CD8-positive, alpha-beta memory T cell (primary cell): ENCODE measurements at regions of chr1 and their contacts with region 1.

Region 1: GRCh38 chr1:206544562-206545257 is 37.4 kb downstream of the RASSF5 start:
- DNase-seq: peak; percentile 67 to 87 (median 75)
- H3K4me3 ChIP-seq: no peak overlapping the region
- H3K4me3 Mint-ChIP-seq: no peak overlapping the region
- H3K27ac ChIP-seq: no peak overlapping the region
- H3K27ac Mint-ChIP-seq: peak overlapping the region in 5 of 8 donors; percentile 36 to 70 (median 44)
- H3K4me1 ChIP-seq: peaks cover 8% of the 10 kb centered on the region
- H3K4me1 Mint-ChIP-seq: peaks cover 10 to 16% (median 15%) of the 10 kb centered on the region in 3 donors
- H3K27me3 ChIP-seq: no peaks in the 10 kb centered on the region
- H3K27me3 Mint-ChIP-seq: peaks cover 0 to 3% of the 10 kb centered on the region in 2 donors

Region 2: GRCh38 chr1:206479183-206480125 is 65.3 kb before region 1 on chr1:
- CTCF ChIA-PET with region 1: interaction called, 11 read pairs
- POLR2A ChIA-PET with region 1: no interaction called
- DNase-seq: peak; percentile 45 to 77 (median 52)
- H3K4me3 ChIP-seq: no peak overlapping the region
- H3K4me3 Mint-ChIP-seq: no peak overlapping the region
- H3K27ac ChIP-seq: no peak overlapping the region
- H3K27ac Mint-ChIP-seq: peak overlapping the region in 6 of 8 donors; percentile 8 to 72 (median 40)
- H3K4me1 ChIP-seq: no peaks in the 10 kb centered on the region
- H3K4me1 Mint-ChIP-seq: peaks cover 7 to 22% (median 10%) of the 10 kb centered on the region in 3 donors
- H3K27me3 ChIP-seq: no peaks in the 10 kb centered on the region
- H3K27me3 Mint-ChIP-seq: no peaks in the 10 kb centered on the region

Region 3: DNA sequence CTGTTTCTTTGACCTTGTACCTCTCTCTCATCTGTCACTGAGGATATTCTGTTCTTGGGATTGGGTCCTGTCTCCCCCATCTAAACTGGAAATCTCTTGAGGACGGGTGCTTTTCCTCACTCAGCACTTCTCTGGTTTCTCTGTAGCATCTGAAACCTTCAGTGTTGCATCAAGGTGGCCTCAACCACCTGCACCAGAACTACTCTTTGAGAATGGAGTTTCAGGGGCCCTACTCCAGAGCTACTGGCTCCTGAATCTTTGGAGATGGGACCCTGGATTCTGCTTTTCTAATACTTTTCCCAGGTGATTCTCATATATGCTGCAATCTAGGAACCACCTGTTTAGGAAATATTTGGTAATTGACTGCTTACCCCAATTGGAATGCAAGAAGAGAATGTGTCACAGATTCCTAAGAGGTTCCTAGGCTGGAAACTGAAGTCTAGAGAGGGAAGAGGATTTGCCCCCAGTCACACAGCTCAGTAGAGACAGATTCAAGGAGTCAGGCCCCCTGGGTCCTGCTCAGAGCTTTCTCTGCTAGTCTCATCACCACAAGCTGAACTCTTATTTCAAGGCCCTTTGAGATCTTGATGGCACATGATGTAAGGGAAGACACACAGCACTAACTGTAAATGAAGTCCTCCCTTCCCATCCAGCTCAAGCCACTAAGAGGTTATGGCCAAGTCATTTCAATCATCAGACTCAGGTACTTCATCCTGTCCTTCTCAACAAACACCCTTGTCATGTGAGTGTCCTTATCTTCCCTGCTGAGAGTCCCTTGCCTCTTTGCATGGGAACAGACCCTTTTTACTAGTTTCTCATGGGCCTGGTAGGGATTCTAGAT is 18.9 kb after region 1 on chr1:
- CTCF ChIA-PET with region 1: interaction called, 122 read pairs
- POLR2A ChIA-PET with region 1: interaction called, 9 read pairs
- DNase-seq: no peak
- H3K4me3 ChIP-seq: peak overlapping the region; percentile 54
- H3K4me3 Mint-ChIP-seq: peak overlapping the region; percentile 63 to 89 (median 81)
- H3K27ac ChIP-seq: no peak overlapping the region
- H3K27ac Mint-ChIP-seq: peak overlapping the region; percentile 84 to 97 (median 95)
- H3K4me1 ChIP-seq: peaks cover 92% of the 10 kb centered on the region
- H3K4me1 Mint-ChIP-seq: peaks cover 89 to 96% (median 95%) of the 10 kb centered on the region in 3 donors
- H3K27me3 ChIP-seq: no peaks in the 10 kb centered on the region
- H3K27me3 Mint-ChIP-seq: peaks cover 0 to 4% of the 10 kb centered on the region in 2 donors

Region 4: GRCh38 chr1:206590025-206590758 is 45.5 kb after region 1 on chr1:
- CTCF ChIA-PET with region 1: interaction called, 503 read pairs
- POLR2A ChIA-PET with region 1: no interaction called
- DNase-seq: peak in 3 of 5 donors; percentile 29 to 64 (median 58)
- H3K4me3 ChIP-seq: no peak overlapping the region
- H3K4me3 Mint-ChIP-seq: peak overlapping the region in 5 of 7 donors; percentile 1 to 65 (median 36)
- H3K27ac ChIP-seq: no peak overlapping the region
- H3K27ac Mint-ChIP-seq: peak overlapping the region; percentile 85 to 96 (median 93)
- H3K4me1 ChIP-seq: peaks cover 13% of the 10 kb centered on the region
- H3K4me1 Mint-ChIP-seq: peaks cover 42 to 66% (median 58%) of the 10 kb centered on the region in 3 donors
- H3K27me3 ChIP-seq: no peaks in the 10 kb centered on the region
- H3K27me3 Mint-ChIP-seq: no peaks in the 10 kb centered on the region

Region 5: DNA sequence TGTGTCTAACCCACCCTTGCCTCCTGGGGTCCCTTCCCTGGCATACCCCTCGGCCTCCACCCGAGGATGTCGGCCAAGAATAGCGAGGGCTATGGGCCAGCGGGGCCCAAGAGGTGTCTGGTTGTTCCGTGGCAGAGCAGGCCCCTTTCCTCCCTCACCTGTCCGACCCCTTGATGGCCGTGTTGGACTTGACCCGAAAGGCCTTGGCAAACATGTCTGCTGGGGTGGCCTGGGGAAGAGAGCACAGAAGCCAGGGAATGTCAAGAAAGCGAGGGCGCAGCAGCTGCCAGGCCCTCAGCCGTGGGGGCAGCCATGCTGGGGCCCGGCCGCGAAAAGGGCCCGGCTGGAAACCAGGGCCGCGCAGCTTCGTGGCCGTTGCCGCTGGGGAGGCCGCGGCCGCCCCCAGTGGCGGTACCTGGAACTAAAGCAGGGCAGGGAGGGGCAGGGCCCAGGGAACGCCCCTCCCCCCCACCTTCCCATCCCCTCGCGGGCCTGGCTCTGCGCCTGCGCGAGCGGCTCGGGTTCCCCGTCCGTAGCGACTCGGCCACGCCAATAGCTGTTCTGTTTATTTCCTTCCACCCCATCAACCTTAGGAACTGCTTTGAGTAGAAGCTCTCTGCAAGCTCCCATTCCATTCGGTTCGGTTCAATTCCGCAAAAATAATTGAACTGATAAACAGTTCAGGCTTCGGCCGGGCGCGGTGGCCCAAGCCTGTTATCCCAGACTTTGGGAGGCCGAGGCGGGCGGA is 67.6 kb after region 1 on chr1 and contains the start of gene EIF2D:
- CTCF ChIA-PET with region 1: interaction called, 24 read pairs
- POLR2A ChIA-PET with region 1: no interaction called
- DNase-seq: peak; percentile 91 to 95 (median 92)
- H3K4me3 ChIP-seq: peak within 1 kb of the TSS; percentile 98
- H3K4me3 Mint-ChIP-seq: peak within 1 kb of the TSS; percentile 88 to 95 (median 92)
- H3K27ac ChIP-seq: peak within 1 kb of the TSS; percentile 91
- H3K27ac Mint-ChIP-seq: peak within 1 kb of the TSS; percentile 63 to 97 (median 96)
- H3K4me1 ChIP-seq: peaks cover 9% of the 10 kb centered on the region
- H3K4me1 Mint-ChIP-seq: peaks cover 14 to 26% (median 21%) of the 10 kb centered on the region in 3 donors
- H3K27me3 ChIP-seq: no peaks in the 10 kb centered on the region
- H3K27me3 Mint-ChIP-seq: no peaks in the 10 kb centered on the region
- total RNA-seq, gene EIF2D: 82.7 to 88.7 TPM